GM10248 (cell line): ENCODE measurements at regions of chr15 and their contacts with region 1.

Region 1: GRCh38 chr15:79853458-79854328 is 43.1 kb downstream of the MTHFS start:
- DNase-seq: peak; percentile 58
- CTCF ChIP-seq: peak; percentile 93

Region 2: GRCh38 chr15:79380755-79381497 is 472.8 kb before region 1 on chr15:
- CTCF ChIA-PET with region 1: interaction called, 133 read pairs
- POLR2A ChIA-PET with region 1: no interaction called
- DNase-seq: peak; percentile 72
- CTCF ChIP-seq: peak; percentile 86

Region 3: DNA sequence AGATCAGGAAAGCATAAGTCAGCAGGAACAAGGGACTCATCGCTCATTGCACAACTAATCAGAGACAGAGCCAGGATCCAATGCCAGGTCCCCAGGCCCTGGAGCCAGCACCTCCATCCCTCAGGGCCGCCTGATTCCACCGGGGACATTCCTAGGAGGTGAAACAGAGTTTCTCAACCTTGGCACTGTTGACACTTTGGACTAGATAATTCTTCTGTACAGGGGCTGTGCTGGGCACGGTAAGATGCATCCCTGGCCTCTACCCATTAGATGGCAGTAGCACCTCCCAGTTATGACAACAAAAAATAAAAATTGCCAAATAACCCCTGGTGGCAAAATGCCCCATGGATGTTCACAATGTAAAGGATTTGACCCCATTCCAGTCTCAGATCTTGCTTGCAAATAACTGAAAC is 84.6 kb before region 1 on chr15:
- CTCF ChIA-PET with region 1: interaction called, 10 read pairs
- POLR2A ChIA-PET with region 1: no interaction called
- DNase-seq: no peak
- CTCF ChIP-seq: peak; percentile 36

Region 4: DNA sequence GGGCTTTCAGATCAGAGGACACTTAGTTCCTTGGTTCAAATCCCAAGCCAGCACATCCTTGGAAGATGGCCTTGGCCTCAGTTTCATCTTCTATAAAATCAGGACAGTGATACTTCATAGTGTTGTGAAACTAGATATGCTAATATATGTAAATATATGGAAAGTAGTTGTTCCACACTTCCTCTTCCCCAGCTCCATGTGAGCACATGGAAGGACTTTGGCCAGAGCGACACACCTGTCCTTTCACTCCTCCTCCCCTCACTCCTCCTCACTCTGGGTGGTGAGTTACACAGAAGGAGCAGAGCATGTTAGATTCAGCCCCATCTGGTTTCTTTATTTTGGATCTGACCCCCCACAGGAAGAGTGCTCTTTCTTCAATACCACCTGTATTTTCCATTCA is 22.1 kb before region 1 on chr15:
- CTCF ChIA-PET with region 1: interaction called, 12 read pairs
- POLR2A ChIA-PET with region 1: no interaction called
- DNase-seq: no peak
- CTCF ChIP-seq: no peak

Region 5: GRCh38 chr15:79863886-79864285 is 10.2 kb after region 1 on chr15:
- CTCF ChIA-PET with region 1: interaction called, 30 read pairs
- POLR2A ChIA-PET with region 1: no interaction called
- DNase-seq: no peak
- CTCF ChIP-seq: no peak

Region 6: GRCh38 chr15:79896637-79897379 is 43.1 kb after region 1 on chr15 and contains the start of gene MTHFS:
- CTCF ChIA-PET with region 1: interaction called, 17 read pairs
- POLR2A ChIA-PET with region 1: no interaction called
- DNase-seq: peak; percentile 83
- CTCF ChIP-seq: peak; percentile 56

Region 7: DNA sequence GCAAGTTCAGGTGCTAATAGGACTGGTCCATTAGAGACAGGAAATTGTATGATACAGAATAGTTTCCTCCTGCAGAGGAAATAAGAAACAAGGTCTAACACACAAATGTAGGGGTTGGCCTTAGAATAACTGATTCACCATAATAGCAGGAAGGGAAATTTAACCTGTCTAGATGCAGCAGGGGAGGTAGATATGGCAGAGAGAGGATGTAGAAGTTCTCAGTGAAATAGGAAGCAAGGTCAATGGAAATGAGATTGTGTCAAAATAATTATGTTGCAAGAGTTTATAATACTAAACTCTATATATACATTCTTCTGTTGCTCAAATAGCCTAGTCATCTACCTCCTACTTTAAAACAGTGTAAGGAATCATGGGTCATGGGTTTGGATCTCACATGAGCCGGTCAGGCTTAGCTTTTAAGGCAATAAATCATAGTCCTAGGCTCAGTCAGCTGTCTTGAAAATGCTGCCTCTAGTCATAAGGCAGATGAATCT is 100.3 kb after region 1 on chr15:
- CTCF ChIA-PET with region 1: no interaction called
- POLR2A ChIA-PET with region 1: no interaction called
- DNase-seq: no peak
- CTCF ChIP-seq: no peak

Region 8: GRCh38 chr15:80141916-80142598 is 288.4 kb after region 1 on chr15:
- CTCF ChIA-PET with region 1: no interaction called
- POLR2A ChIA-PET with region 1: no interaction called
- DNase-seq: no peak
- CTCF ChIP-seq: no peak

Region 9: GRCh38 chr15:80173022-80173759 is 319.5 kb after region 1 on chr15:
- CTCF ChIA-PET with region 1: interaction called, 13 read pairs
- POLR2A ChIA-PET with region 1: no interaction called
- DNase-seq: peak; percentile 81
- CTCF ChIP-seq: peak; percentile 90